Transverse colon (tissue), 4 donors: ENCODE measurements at regions of chr12 and their contacts with region 1.

Region 1: GRCh38 chr12:32069071-32069470 is 37.6 kb upstream of the BICD1 start:
- DNase-seq: no peak
- H3K4me3 ChIP-seq: no peak overlapping the region
- H3K27ac ChIP-seq: peak overlapping the region in 2 of 4 donors; percentile 23 to 35
- H3K4me1 ChIP-seq: peaks cover 0 to 23% (median 8%) of the 10 kb centered on the region in 4 donors
- H3K27me3 ChIP-seq: no peaks in the 10 kb centered on the region
- CTCF ChIP-seq: no peak
- EP300 ChIP-seq: no peak
- POLR2A ChIP-seq: no peak

Region 2: GRCh38 chr12:32211066-32211899 is 142.2 kb after region 1 on chr12:
- in situ Hi-C with region 1: no loop called
- intact Hi-C with region 1: no loop called
- DNase-seq: no peak
- H3K4me3 ChIP-seq: no peak overlapping the region
- H3K27ac ChIP-seq: no peak overlapping the region
- H3K4me1 ChIP-seq: no peaks in the 10 kb centered on the region
- H3K27me3 ChIP-seq: no peaks in the 10 kb centered on the region
- CTCF ChIP-seq: no peak
- EP300 ChIP-seq: no peak
- POLR2A ChIP-seq: no peak

Region 3: GRCh38 chr12:32312049-32312670 is 243.1 kb after region 1 on chr12:
- in situ Hi-C with region 1: loop called in 3 of 4 experiments (anchors 10 to 25 kb)
- intact Hi-C with region 1: loop called (anchors 5 kb)
- DNase-seq: no peak
- H3K4me3 ChIP-seq: no peak overlapping the region
- H3K27ac ChIP-seq: no peak overlapping the region
- H3K4me1 ChIP-seq: peaks cover 0 to 7% (median 0%) of the 10 kb centered on the region in 4 donors
- H3K27me3 ChIP-seq: no peaks in the 10 kb centered on the region
- CTCF ChIP-seq: peak; percentile 44 to 65 (median 53)
- EP300 ChIP-seq: no peak
- POLR2A ChIP-seq: no peak